Aorta (tissue), 5 donors: ENCODE measurements at regions of chr13 and their contacts with region 1.

Region 1: DNA sequence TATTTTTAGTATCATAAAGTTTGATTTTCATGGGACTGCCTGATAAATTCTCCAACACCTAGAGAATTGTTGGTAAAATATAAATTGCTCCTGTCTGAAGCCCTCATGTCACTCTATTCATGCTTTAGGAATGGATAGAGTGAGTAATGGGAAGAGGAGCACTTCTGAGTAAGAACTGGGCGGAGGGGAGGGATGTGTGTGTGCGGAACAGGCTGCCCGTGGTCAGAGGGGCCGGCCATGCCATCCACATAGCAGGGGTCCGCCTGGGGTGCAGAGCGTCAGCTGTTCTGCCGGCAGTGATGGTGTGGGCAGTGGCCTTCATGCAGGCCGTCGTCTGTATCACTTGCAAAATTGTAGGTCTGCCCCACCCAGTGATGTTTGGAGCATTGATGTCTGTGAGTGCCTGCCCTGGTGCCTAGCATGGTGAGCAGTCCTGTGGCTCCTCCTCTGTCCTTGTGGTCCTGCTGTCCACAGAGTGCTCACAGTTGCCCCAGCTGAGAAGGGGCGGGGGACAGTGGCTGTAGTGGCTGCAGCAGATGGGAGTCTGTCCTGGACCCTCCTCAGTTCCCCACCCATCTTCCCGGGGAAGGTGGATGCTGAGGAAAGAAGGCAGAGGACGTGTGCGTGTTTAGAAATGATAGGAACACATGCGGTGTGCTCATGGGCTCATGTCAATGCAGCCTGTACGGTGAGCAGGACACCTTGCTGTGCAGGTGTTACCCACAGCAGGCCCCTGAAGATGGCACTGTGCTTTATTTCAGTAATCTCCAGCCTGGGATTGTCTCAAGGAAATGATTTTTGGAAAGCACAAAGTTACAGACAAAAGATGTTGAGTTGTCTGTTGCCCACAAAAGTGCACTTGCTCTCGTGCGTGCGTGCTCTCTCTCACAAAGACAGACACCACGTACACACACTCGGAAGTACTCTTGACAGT is 49.4 kb upstream of the TEX29 start:
- DNase-seq: no peak
- ATAC-seq: peak; percentile 12
- H3K4me3 ChIP-seq: no peak overlapping the region
- H3K27ac ChIP-seq: no peak overlapping the region
- H3K4me1 ChIP-seq: peaks cover 0 to 1% of the 10 kb centered on the region in 2 donors
- H3K27me3 ChIP-seq: no peaks in the 10 kb centered on the region

Region 2: GRCh38 chr13:111228262-111229144 is 42.5 kb before region 1 on chr13:
- intact Hi-C with region 1: loop called in 1 of 2 experiments (anchors 10 kb)
- DNase-seq: peak; percentile 79 to 80
- ATAC-seq: peak; percentile 77
- H3K4me3 ChIP-seq: no peak overlapping the region
- H3K27ac ChIP-seq: peak overlapping the region in 1 of 2 donors; percentile 11
- H3K4me1 ChIP-seq: no peaks in the 10 kb centered on the region
- H3K27me3 ChIP-seq: no peaks in the 10 kb centered on the region